Caco-2 (cell line): ENCODE measurements at regions of chr14 and their contacts with region 1.

Region 1: DNA sequence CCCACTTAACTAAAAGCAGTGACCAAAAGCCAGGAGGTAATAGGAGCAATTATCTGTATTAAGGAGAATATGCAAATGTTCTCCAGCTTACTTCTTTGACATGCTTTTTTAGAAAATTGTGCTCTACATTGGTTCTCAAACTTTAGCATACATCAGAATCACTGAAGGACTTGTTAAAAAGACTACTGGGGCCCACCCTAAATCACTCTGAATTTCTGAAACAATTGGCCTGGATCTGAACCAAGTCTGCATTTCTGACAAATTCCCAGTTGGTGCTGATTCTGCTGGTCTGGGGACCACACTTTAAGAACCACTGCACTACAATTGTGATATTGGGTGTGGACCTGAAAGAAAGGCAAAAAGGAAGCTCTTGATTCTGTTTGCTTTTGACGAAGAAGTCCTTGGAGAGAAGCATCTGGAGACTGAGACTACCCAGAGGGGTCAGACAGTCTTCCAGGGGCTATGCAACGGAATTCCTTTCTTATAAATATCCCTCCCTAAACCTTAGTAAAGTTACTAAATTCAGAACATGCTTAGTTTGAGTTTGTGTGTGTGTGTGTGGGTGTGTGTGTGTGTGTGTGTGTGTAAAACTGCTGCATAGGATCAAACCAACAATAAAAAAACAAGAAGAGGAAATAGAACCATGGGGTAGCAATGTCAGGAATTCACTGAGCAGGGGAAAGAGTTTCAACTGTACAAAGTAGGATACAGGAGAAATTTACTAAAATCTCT is 36.8 kb downstream of the EAPP start:
- DNase-seq: no peak
- H3K4me3 ChIP-seq: no peak overlapping the region
- H3K4me3 Mint-ChIP-seq: no peak overlapping the region
- H3K27ac Mint-ChIP-seq: no peak overlapping the region
- H3K4me1 ChIP-seq: peaks cover 26% of the 10 kb centered on the region
- H3K4me1 Mint-ChIP-seq: peaks cover 7% of the 10 kb centered on the region
- H3K27me3 ChIP-seq: no peaks in the 10 kb centered on the region
- H3K27me3 Mint-ChIP-seq: no peaks in the 10 kb centered on the region
- CTCF ChIP-seq: no peak

Region 2: DNA sequence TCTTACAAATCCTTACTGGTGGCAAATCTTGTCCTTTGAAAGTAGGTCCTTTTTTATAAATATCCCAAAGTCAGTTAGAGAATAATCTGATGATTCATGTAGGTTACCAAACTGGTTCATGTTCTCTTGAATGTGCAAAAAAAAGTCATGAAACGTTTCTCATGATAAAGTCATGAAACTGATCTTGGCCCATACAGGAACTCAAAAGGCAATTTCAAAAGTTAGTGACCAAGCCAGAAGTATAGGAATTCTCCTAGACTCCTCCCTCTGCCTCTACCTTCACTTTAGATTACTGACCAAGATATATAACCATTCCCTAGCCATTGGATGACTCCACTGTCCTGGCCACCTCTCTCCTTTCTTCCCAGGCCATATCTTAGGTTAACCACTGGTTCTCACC is 13.3 kb before region 1 on chr14:
- CTCF ChIA-PET with region 1: no interaction called
- POLR2A ChIA-PET with region 1: interaction called, 12 read pairs
- intact Hi-C with region 1: no loop called
- DNase-seq: no peak
- H3K4me3 ChIP-seq: no peak overlapping the region
- H3K4me3 Mint-ChIP-seq: no peak overlapping the region
- H3K27ac Mint-ChIP-seq: no peak overlapping the region
- H3K4me1 ChIP-seq: no peaks in the 10 kb centered on the region
- H3K4me1 Mint-ChIP-seq: no peaks in the 10 kb centered on the region
- H3K27me3 ChIP-seq: no peaks in the 10 kb centered on the region
- H3K27me3 Mint-ChIP-seq: no peaks in the 10 kb centered on the region
- CTCF ChIP-seq: no peak

Region 3: DNA sequence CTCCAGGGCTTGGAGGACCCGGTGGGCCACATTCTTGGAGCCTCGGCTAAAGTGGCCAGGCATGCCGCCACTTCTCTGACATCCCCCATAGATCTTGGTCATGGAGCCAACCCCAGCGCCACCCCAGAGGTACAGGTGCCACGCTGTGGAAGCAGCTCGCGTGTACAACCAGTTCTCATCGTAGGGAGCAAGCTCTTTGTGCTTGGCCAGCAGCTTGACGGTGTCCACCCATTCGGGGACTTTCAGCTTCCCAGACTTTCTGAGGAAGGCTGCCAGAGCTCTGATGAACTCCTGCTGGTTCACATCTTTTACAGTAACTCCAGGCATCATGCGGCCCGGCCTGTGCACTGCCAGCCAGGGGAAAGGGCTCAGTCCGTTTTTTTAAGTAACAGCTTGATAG is 66.1 kb after region 1 on chr14:
- CTCF ChIA-PET with region 1: no interaction called
- POLR2A ChIA-PET with region 1: no interaction called
- intact Hi-C with region 1: no loop called
- DNase-seq: no peak
- H3K4me3 ChIP-seq: no peak overlapping the region
- H3K4me3 Mint-ChIP-seq: no peak overlapping the region
- H3K27ac Mint-ChIP-seq: no peak overlapping the region
- H3K4me1 ChIP-seq: no peaks in the 10 kb centered on the region
- H3K4me1 Mint-ChIP-seq: no peaks in the 10 kb centered on the region
- H3K27me3 ChIP-seq: no peaks in the 10 kb centered on the region
- H3K27me3 Mint-ChIP-seq: no peaks in the 10 kb centered on the region
- CTCF ChIP-seq: no peak